OCI-LY7 (cell line): ENCODE measurements at regions of chr5 and their contacts with region 1.

Region 1: DNA sequence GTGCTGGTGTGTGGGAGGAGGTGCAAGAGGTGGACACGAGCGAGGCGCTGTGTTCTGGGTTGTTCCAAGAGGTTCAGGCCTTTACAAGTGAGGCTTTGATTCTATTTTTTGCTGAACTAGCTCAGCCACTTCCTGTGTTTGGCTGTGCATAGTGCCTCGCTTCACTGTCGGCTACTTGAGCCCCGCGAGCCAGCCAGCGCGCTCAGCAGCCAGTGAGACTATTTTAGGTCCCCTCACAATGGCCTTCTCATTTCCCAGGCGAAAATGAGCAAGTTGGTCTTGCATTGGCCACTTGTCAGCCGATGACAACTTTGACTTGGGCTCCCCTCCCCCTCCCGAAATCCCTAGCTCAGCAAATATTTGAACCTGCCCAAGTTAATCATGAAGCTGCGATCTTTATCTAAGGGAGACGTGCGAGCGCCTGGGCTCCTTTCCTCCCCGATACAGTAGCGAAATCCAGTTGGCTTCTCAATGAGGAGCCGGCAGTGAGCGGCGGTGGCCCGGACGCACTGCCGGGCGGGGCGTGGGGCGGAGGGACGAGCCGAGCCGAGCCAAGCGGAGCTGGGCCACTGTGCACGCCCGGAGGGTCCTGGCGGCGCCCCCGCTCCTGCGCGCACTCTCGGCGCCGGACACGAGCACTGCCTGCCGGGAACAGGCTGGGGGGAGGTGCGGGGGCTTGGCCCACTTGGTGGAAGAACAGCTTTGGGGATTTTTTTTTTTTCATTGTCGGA is 72.6 kb downstream of the PIK3R1 start:
- DNase-seq: peak; percentile 84
- H3K4me3 ChIP-seq: peak overlapping the region; percentile 51
- H3K27ac ChIP-seq: peak overlapping the region; percentile 43
- H3K4me1 ChIP-seq: peaks cover 39% of the 10 kb centered on the region
- CTCF ChIP-seq: 0 out of 2 replicates have a peak, but pooled peaks have one; percentile 4

Region 2: DNA sequence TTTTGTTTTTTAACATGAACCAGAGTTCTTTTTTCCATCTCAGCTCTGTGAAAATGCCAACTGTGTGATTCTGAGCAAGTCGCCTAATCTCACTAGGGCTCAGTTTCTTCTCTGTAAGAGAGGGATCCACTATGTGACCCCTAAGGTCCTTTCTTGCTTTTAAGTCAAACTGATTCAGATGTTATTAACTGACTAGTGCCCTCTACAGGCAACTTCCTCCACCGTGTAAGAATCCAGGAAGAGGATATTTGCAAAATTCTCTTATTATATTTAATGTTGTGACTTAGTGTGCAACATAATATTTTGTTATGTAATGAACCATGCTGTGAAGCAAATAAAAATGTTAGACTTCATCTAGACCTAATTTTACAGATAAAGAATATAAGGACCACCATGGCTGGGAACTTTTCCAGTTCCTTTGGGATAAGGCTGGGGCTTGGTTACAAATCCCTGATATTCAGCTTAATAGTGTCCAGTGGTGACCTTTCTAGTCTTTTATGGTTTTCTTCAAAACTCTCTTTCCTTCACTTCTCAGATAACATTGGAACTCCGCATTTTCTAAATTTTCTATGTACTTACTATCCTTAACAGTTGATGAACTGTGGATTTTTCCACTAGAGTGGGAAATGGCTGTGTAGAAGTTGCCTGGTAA is 172.1 kb after region 1 on chr5:
- CTCF ChIA-PET with region 1: no interaction called
- POLR2A ChIA-PET with region 1: no interaction called
- intact Hi-C with region 1: loop called (anchors 1 kb)
- DNase-seq: peak; percentile 68
- H3K4me3 ChIP-seq: no peak overlapping the region
- H3K27ac ChIP-seq: no peak overlapping the region
- H3K4me1 ChIP-seq: no peaks in the 10 kb centered on the region
- CTCF ChIP-seq: peak; percentile 90

Region 3: GRCh38 chr5:69007726-69008368 is 719.7 kb after region 1 on chr5:
- CTCF ChIA-PET with region 1: no interaction called
- POLR2A ChIA-PET with region 1: no interaction called
- intact Hi-C with region 1: loop called (anchors 5 kb)
- DNase-seq: peak; percentile 72
- H3K4me3 ChIP-seq: no peak overlapping the region
- H3K27ac ChIP-seq: no peak overlapping the region
- H3K4me1 ChIP-seq: no peaks in the 10 kb centered on the region
- CTCF ChIP-seq: peak; percentile 95